ENCODE measurements at regions of chr14 and their contacts with region 1.

Region 1: GRCh38 chr14:70080074-70080473 is 108.7 kb downstream of the SLC8A3 start:
- DNase-seq: no peak
- ATAC-seq: no peak
- H3K4me3 ChIP-seq: no peak overlapping the region
- H3K27ac ChIP-seq: no peak overlapping the region
- H3K4me1 ChIP-seq: peaks cover 12% of the 10 kb centered on the region
- H3K27me3 ChIP-seq: no peaks in the 10 kb centered on the region; a peak in 1 of 5 replicates
- CTCF ChIP-seq: no peak
- EP300 ChIP-seq: no peak
- POLR2A ChIP-seq: no peak
- RAD21 ChIP-seq: no peak

Region 2: GRCh38 chr14:69863083-69863482 is 217.0 kb before region 1 on chr14:
- CTCF ChIA-PET with region 1: no interaction called
- POLR2A ChIA-PET with region 1: no interaction called
- in situ Hi-C with region 1: no loop called
- intact Hi-C with region 1: loop called (anchors 2 kb)
- DNase-seq: peak; percentile 52
- ATAC-seq: peak; percentile 83
- H3K4me3 ChIP-seq: no peak overlapping the region
- H3K27ac ChIP-seq: no peak overlapping the region
- H3K4me1 ChIP-seq: peaks cover 37% of the 10 kb centered on the region
- H3K27me3 ChIP-seq: peaks cover 2 to 22% of the 10 kb centered on the region in 2 experiments; a peak in 2 of 5 replicates
- CTCF ChIP-seq: peak; percentile 79
- EP300 ChIP-seq: no peak
- POLR2A ChIP-seq: no peak
- RAD21 ChIP-seq: peak; percentile 78

Region 3: DNA sequence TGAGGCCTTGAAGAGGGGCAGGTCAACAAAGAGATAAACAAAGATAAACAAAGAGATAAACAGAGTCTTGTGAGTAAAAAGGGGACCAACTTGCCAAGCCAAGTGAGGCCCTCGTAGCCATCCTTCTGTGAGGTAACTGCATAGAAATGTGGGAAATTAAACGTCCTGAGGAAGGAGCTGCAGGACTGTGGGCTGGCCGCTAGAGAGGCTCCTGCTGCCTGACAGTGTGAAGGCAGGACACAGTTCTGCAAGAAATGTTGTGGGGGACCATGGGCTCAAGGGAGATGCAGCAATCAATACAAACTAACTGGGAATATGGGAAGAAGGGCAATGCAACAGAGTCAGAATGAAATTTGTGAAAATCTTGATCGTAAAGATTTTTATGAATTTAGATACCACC is 16.8 kb after region 1 on chr14:
- CTCF ChIA-PET with region 1: no interaction called
- POLR2A ChIA-PET with region 1: no interaction called
- in situ Hi-C with region 1: no loop called
- intact Hi-C with region 1: no loop called
- DNase-seq: peak; percentile 9
- ATAC-seq: peak; percentile 92
- H3K4me3 ChIP-seq: no peak overlapping the region
- H3K27ac ChIP-seq: no peak overlapping the region
- H3K4me1 ChIP-seq: peaks cover 9% of the 10 kb centered on the region; the same call in 1 of the 2 replicates
- H3K27me3 ChIP-seq: no peaks in the 10 kb centered on the region; a peak in 2 of 5 replicates
- CTCF ChIP-seq: peak; percentile 47
- EP300 ChIP-seq: no peak
- POLR2A ChIP-seq: no peak
- RAD21 ChIP-seq: no peak

Region 4: DNA sequence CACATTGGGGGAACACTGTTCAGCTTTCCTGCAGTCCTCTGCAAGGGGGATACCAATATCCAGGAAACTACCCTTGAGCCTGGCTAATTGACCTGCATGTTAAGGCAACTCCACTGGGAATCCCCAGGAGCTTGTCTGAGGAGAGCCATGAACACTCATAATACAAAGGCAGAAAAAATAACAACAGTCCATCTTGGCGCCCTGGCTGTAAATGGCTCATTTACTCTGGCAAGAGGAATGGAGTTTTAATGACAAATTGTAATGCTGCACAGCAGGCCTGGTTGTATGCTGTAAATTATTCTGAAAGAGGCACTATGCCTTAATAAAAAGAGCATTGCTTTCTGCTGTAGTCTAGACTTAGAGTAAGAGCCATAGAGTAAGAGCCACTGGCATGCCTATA is 50.4 kb after region 1 on chr14:
- CTCF ChIA-PET with region 1: no interaction called
- POLR2A ChIA-PET with region 1: no interaction called
- in situ Hi-C with region 1: no loop called
- intact Hi-C with region 1: no loop called
- DNase-seq: no peak
- ATAC-seq: no peak
- H3K4me3 ChIP-seq: no peak overlapping the region
- H3K27ac ChIP-seq: no peak overlapping the region
- H3K4me1 ChIP-seq: no peaks in the 10 kb centered on the region
- H3K27me3 ChIP-seq: no peaks in the 10 kb centered on the region; a peak in 1 of 5 replicates
- CTCF ChIP-seq: no peak
- EP300 ChIP-seq: no peak
- POLR2A ChIP-seq: no peak
- RAD21 ChIP-seq: no peak